ENCODE measurements at regions of chr9 and their contacts with region 1.

Region 1: GRCh38 chr9:21789541-21790037 is 12.8 kb upstream of the MTAP start:
- DNase-seq: peak; percentile 93
- H3K4me3 ChIP-seq: peak overlapping the region; percentile 21
- CTCF ChIP-seq: peak; percentile 75

Region 2: DNA sequence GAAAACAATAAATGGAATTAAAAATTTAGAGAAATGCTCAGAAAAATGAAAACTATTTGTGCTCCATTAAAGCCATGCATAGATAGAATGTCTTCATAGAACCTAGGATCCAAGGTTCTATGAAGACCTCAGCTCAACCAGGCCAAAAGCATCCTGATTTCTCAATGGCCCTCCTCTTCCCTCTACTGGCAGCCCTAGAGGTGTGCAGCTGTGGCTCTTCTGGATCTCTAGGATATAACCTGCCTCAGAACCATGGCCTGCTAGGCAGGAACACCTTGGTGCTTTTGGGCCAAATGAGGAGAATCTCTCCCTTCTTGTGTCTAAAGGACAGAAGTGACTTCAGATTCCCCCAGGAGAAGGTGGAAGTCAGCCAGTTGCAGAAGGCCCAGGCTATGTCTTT is 334.3 kb before region 1 on chr9:
- in situ Hi-C with region 1: loop called (anchors 25 kb)
- DNase-seq: no peak
- H3K4me3 ChIP-seq: no peak overlapping the region
- CTCF ChIP-seq: peak; percentile 62

Region 3: GRCh38 chr9:21559424-21560280 is 229.9 kb before region 1 on chr9:
- in situ Hi-C with region 1: loop called (anchors 5 kb)
- DNase-seq: peak; percentile 43
- H3K4me3 ChIP-seq: peak overlapping the region; percentile 84
- CTCF ChIP-seq: no peak

Measured in astrocyte of the cerebellum (primary cell).